Activated naive CD4-positive, alpha-beta T cell treated with anti-CD3 and anti-CD28 coated beads, Interleukin-2, amount 10 ng/mL, durations not matched to agents 7 days and 5 days (primary cell): ENCODE measurements at regions of chr3 and their contacts with region 1.

Region 1: DNA sequence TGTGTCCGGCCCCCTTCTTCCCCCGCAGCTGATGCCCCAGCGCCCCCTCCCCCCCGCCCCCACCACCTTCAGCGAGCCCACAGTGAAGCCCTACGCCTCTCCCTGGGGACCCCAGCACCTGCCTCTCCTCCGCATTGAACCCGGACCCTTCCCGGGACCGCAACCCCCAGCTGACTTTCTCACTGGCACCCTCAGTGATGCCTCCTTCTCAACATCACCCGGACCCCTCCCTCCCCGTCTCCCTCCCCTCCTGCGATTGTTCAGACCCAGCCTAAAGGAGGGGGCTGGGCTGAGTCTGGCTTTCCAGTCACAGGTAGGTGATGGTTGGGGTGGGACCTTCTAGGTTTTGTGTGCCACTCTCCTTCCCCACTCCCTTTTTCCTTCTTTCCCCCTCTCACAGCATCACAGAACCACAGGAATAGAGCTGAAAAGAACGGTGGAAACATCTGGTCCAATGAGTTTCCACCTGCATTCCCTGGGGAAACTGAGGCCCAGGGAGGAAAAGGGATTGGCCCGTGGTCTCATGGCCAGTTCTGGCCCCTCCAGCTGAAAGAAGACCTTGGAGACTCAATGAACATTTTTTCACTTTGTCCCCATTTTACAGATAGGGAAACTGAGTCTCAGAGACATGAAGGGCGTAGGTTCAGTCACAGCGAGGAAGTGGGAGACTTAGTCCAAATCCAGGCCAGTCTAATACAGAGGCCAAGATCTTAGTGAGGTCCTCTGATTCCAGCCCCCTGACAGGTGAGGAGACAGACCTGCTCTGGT is 828 bp downstream of the CAND2 start:
- DNase-seq: no peak
- H3K4me3 Mint-ChIP-seq: no peak overlapping the region
- H3K27ac Mint-ChIP-seq: no peak overlapping the region
- H3K4me1 Mint-ChIP-seq: peaks cover 10% of the 10 kb centered on the region
- H3K27me3 Mint-ChIP-seq: peaks cover 47% of the 10 kb centered on the region

Region 2: DNA sequence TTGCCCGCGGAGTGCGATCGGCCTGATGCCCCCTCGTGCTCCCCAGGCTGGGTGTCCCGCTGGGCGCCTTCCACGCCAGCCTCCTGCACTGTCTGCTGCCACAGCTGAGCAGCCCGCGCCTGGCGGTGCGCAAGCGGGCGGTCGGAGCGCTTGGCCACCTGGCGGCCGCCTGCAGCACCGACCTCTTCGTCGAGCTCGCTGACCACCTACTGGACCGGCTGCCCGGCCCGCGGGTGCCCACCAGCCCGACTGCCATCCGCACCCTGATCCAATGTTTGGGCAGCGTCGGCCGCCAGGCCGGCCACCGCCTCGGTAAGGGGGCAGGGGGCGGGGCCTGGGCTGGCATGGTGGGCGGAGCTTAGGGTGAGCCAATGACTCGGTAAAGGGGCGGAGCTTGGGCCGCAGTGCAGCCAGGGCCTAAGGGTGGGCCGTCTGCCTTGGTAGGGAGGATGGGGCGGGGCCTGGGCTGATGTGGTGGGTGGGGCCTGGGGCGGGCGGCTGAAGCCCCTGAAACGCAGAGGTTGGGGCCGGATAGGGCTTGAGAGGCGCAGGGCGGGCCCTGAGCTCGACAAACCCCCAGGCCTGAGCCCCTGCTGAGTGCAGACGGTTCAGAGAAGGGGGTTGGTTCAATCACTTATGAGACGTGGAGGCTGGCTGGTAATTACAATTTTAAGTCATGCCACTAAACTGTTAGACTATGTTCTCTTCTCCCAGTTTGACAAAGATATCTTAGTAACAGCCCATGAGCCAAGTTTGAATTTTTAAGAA is 12.9 kb after region 1 on chr3:
- CTCF ChIA-PET with region 1: interaction called, 10 read pairs
- DNase-seq: peak; percentile 96
- H3K4me3 Mint-ChIP-seq: peak overlapping the region; percentile 50
- H3K27ac Mint-ChIP-seq: no peak overlapping the region
- H3K4me1 Mint-ChIP-seq: peaks cover 5% of the 10 kb centered on the region
- H3K27me3 Mint-ChIP-seq: peaks cover 18% of the 10 kb centered on the region

Region 3: DNA sequence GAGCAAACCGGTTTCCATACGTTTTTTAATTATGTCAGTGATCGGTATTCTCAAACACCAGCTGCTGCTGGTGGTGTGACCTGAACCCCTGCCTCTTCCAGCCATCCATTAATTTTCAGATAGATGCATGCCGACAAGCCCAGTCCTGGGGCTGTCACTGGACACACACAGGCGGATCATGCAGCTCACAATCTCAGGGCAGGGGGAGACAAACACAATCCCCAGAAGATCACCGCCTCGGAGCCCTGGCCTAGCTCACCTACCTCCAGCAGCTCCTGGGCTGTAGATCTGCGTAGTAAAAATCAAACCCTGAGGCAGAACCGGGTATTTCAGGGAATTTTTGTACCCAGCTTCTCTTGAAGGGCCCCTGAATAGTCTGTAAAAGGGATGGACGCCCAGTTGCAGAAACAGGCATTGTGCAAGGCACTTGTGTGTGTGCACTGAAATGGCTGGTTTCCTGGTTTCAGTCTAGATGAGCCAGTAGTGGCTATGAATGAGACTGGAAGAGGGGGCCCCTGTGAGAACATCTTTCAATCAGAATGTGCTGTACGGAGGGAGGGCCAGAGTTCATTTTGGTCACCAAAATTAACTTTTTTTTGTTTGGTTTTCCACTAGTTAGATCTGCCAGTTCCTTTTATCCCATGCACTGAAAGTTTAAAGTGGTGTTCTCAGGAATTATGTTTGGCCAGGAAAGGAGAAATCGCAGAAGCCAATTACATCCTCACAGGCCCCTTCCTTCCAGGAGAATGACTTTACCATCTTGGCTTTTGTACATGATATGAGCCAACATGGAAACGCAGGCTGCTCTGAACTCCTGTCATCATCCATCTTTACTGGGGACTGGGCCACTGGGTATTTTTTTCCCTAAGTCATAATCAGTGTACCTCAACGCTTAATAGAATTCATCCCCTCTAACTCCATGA is 99.0 kb after region 1 on chr3:
- CTCF ChIA-PET with region 1: no interaction called
- DNase-seq: no peak
- H3K4me3 Mint-ChIP-seq: no peak overlapping the region
- H3K27ac Mint-ChIP-seq: peak overlapping the region; percentile 49
- H3K4me1 Mint-ChIP-seq: peaks cover 3% of the 10 kb centered on the region
- H3K27me3 Mint-ChIP-seq: peaks cover 6% of the 10 kb centered on the region